Heart right ventricle (tissue), 16 donors: ENCODE measurements at regions of chr5 and their contacts with region 1.

Region 1: DNA sequence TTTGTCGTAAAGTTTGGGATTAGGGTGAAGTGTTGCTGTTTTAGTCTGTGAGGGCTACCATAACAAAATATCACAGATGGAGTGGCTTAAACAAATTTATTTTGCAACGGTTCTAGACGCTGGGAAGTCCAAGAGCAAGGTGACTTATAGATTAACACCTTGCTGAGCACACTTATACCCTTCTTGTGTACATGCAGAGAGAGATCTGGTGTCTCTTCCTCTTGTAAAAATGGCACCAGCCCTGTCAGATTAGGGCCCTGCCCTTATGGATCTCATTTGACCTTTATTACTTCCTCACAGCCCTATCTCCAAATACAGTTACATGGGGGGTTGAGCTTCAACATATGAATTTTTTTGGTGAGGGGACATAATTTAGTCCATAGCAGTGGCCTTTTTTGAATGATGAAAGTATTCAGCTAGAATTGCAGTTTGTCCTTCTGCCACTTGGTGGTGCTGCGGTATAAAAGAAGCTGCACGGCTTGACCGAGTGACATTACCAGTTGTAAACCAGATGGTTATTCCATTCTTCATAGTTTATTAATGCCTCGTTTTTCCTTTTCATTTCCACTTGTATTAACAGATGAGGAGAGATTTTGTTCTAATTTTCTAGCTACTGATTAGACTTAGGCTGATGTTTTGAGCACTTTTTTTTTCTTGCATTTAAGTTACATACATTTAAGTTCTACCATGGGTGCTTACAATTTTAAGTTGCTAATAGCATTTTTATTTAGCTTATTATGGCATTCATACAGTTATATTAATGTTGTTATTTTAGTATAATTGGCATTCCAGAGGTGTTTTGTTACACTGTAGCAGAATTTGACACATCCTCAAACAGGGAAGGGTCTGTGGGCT is 19.4 kb downstream of the DCP2 start:
- DNase-seq: peak; percentile 56 to 73
- ATAC-seq: peak; percentile 53 to 90 (median 82)
- H3K4me3 ChIP-seq: no peak overlapping the region
- H3K27ac ChIP-seq: no peak overlapping the region
- H3K4me1 ChIP-seq: peaks cover 0 to 21% (median 5%) of the 10 kb centered on the region in 9 donors
- H3K27me3 ChIP-seq: no peaks in the 10 kb centered on the region
- CTCF ChIP-seq: peak; percentile 85 to 96 (median 91)

Region 2: DNA sequence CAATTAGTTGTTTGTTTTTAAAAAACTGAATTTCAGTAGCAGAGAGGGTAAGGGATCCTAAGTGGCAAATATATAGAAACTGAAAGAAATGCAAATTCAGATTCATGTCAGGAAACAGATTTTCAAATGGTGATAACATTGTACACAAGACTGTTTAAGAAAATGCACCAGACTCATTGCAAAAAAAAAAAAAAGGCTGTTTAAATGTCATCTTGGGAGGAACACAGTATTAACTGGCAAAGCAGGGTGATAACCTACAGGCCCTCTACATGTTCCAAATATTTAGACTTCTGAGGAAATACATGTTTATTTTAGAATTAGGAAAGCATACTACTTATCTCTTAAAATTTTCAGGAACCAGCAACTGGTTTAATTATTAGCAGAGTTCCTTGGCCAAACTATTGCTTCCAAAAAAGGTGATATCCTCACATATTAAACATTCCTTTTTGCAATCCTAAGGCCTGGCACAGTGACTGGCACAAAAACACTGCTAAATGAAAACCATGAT is 324.3 kb after region 1 on chr5:
- intact Hi-C with region 1: loop called in 2 of 10 experiments (anchors 5 to 10 kb)
- DNase-seq: no peak
- ATAC-seq: no peak
- H3K4me3 ChIP-seq: no peak overlapping the region
- H3K27ac ChIP-seq: peak overlapping the region in 1 of 10 donors; percentile 34
- H3K4me1 ChIP-seq: peaks cover 0 to 22% (median 13%) of the 10 kb centered on the region in 9 donors
- H3K27me3 ChIP-seq: no peaks in the 10 kb centered on the region
- CTCF ChIP-seq: no peak

Region 3: DNA sequence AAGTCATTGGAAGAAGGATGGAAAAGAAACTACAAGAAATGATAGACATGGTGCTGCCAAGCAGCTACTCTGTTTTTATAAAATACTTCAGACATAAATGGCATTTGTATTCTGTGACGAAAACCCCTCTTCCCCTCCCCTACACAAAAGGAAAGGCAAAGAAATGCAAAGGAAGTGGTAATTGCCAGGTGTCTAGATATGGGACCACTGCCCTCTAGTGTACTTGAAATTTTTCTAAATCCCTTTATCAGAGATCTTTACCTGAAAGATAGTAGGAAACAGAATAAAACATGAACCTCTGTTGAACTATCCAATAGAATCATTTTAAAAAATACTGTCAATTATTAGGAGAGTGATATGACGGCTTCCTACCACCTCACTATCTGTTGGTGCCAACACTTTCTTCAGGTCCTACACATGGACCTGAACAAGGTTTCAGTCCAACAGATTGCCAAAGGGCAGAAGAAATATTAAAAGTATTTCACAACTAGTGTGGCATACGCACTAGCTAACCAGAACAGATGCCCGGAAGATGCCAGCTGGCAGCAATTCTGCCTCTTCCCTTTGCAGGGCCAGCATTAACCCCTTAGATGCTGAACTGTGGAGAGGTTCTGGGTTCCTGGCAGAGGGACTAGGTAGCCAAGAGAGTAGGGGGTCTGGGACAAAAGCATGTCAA is 334.7 kb after region 1 on chr5:
- intact Hi-C with region 1: loop called in 9 of 10 experiments (anchors 1 to 10 kb)
- DNase-seq: peak; percentile 31 to 34
- ATAC-seq: peak; percentile 66 to 92 (median 74)
- H3K4me3 ChIP-seq: no peak overlapping the region
- H3K27ac ChIP-seq: peak overlapping the region in 1 of 10 donors; percentile 35
- H3K4me1 ChIP-seq: peaks cover 0 to 15% (median 9%) of the 10 kb centered on the region in 9 donors
- H3K27me3 ChIP-seq: no peaks in the 10 kb centered on the region
- CTCF ChIP-seq: peak; percentile 37 to 71 (median 51)

Region 4: DNA sequence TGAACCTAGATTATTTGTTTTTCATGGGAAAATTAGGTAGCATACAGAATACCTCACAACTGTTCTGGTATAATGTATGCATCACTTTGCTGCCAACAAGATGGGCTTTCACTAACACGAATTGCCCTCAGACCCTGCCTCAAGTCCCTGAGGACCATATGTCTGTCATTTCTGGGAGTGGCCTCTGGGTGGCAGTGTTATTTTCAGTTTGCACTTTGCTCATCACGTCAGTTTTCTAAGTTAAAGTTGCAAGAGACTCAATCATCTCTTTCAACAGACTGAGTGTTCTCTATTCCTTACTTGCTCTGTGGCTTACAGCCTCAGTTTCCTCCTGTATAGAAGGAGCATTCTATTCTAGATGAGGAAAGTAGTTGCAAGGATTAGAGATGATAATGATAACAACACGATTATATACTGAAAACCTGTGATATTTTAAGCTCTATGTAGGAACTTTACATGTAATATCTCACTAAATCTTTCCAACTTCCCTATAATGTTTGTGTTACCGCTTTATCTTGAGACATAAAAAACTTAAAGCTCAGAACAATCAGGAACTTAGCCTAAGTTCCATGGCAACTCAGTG is 383.1 kb after region 1 on chr5:
- intact Hi-C with region 1: loop called in 1 of 10 experiments (anchors 5 kb)
- DNase-seq: peak in 1 of 2 donors; percentile 57
- ATAC-seq: peak in 3 of 8 donors; percentile 46 to 71 (median 52)
- H3K4me3 ChIP-seq: no peak overlapping the region
- H3K27ac ChIP-seq: no peak overlapping the region
- H3K4me1 ChIP-seq: peaks cover 0 to 30% (median 0%) of the 10 kb centered on the region in 9 donors
- H3K27me3 ChIP-seq: peaks cover 0 to 29% (median 0%) of the 10 kb centered on the region in 7 donors
- CTCF ChIP-seq: peak; percentile 45 to 84 (median 76)

Region 5: GRCh38 chr5:113507601-113508000 is 511.6 kb after region 1 on chr5:
- intact Hi-C with region 1: loop called in 8 of 10 experiments (anchors 2 to 10 kb)
- DNase-seq: no peak
- ATAC-seq: no peak
- H3K4me3 ChIP-seq: no peak overlapping the region
- H3K27ac ChIP-seq: no peak overlapping the region
- H3K4me1 ChIP-seq: no peaks in the 10 kb centered on the region
- H3K27me3 ChIP-seq: peaks cover 0 to 46% (median 0%) of the 10 kb centered on the region in 7 donors
- CTCF ChIP-seq: no peak

Region 6: GRCh38 chr5:113513384-113514288 is 517.6 kb after region 1 on chr5 and contains the start of gene YTHDC2:
- intact Hi-C with region 1: loop called in 8 of 10 experiments (anchors 2 to 10 kb)
- DNase-seq: peak; percentile 88 to 89
- ATAC-seq: peak; percentile 98 to 99 (median 98)
- H3K4me3 ChIP-seq: peak within 1 kb of the TSS; percentile 65 to 93 (median 86)
- H3K27ac ChIP-seq: peak within 1 kb of the TSS; percentile 72 to 97 (median 95)
- H3K4me1 ChIP-seq: peaks cover 0 to 36% (median 26%) of the 10 kb centered on the region in 9 donors
- H3K27me3 ChIP-seq: peaks cover 0 to 18% (median 0%) of the 10 kb centered on the region in 7 donors
- CTCF ChIP-seq: peak in 7 of 9 donors; percentile 5 to 55 (median 42)
- total RNA-seq, gene YTHDC2: 10.6 to 20.9 (median 14.0) TPM

Region 7: GRCh38 chr5:113606298-113607134 is 610.5 kb after region 1 on chr5:
- intact Hi-C with region 1: loop called in 9 of 10 experiments (anchors 1 to 10 kb)
- DNase-seq: peak in 1 of 2 donors; percentile 53
- ATAC-seq: peak; percentile 85 to 93 (median 90)
- H3K4me3 ChIP-seq: peak overlapping the region in 3 of 10 donors; percentile 4 to 28 (median 7)
- H3K27ac ChIP-seq: no peak overlapping the region
- H3K4me1 ChIP-seq: peaks cover 0 to 10% (median 3%) of the 10 kb centered on the region in 9 donors
- H3K27me3 ChIP-seq: peaks cover 0 to 6% (median 0%) of the 10 kb centered on the region in 7 donors
- CTCF ChIP-seq: peak; percentile 53 to 85 (median 76)